Activated T-helper 1 cell treated with anti-CD3 and anti-CD28 coated beads, Interleukin-12 subunit alpha, Interleukin-12 subunit beta, Interleukin-2, Interleukin-4 antibody, amounts not matched to agents 30 ng/mL and 10 ng/mL and 1 ng/mL, durations not matched to agents 14 hours and 24 hours and 36 hours (primary cell): ENCODE measurements at regions of chrX and their contacts with region 1.

Region 1: GRCh38 chrX:57453901-57454300 is 137.9 kb upstream of the ZXDB start:
- DNase-seq: peak; percentile 0
- H3K4me3 Mint-ChIP-seq: no peak overlapping the region
- H3K27ac Mint-ChIP-seq: peak overlapping the region; percentile 23
- H3K4me1 Mint-ChIP-seq: peaks cover 6% of the 10 kb centered on the region
- H3K27me3 Mint-ChIP-seq: no peaks in the 10 kb centered on the region

Region 2: DNA sequence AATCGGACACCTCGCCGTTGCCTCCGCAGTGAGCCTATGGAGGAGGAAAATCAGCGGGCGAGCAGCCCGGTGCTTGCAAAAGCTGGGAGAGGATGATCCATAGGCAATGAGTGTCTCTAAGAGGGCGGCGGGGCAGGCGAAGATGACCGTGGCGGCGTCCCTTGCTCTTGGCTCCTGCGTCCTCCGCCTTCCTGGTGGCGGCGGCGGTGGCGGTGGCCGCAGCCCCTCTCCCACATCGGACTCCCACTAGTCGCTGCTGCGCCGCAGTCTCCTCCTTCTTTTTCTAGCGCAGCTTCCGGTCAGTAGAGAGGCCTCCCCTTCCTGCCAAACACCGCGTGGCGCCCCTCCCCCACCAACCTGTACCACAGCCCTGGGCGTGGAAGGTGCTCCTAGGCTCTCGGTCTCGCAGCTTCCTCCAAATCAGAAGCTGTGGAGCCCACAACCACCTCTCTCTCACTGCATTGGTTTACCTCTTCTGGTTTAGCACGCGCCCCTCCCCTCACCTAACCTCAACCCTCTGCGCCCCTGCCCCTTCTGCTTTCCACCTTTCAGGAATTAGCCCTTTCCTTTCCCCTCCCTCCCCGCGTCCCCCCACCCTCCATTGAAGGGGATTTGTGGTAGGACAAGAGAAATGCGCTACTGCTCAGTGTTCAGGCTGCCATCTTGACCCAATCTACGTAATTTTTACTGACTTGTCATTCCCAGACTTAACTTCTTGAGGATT is 458.5 kb before region 1 on chrX and contains the start of gene SPIN3:
- intact Hi-C with region 1: loop called (anchors 10 kb)
- DNase-seq: peak; percentile 42
- H3K4me3 Mint-ChIP-seq: peak within 1 kb of the TSS; percentile 90
- H3K27ac Mint-ChIP-seq: peak within 1 kb of the TSS; percentile 83
- H3K4me1 Mint-ChIP-seq: peaks cover 18% of the 10 kb centered on the region
- H3K27me3 Mint-ChIP-seq: no peaks in the 10 kb centered on the region
- total RNA-seq, gene SPIN3: 9.4 and 9.6 TPM in 2 replicates

Region 3: GRCh38 chrX:57918750-57919436 is 465.0 kb after region 1 on chrX:
- intact Hi-C with region 1: loop called (anchors 10 kb)
- DNase-seq: no peak
- H3K4me3 Mint-ChIP-seq: no peak overlapping the region
- H3K27ac Mint-ChIP-seq: no peak overlapping the region
- H3K4me1 Mint-ChIP-seq: no peaks in the 10 kb centered on the region
- H3K27me3 Mint-ChIP-seq: no peaks in the 10 kb centered on the region